H1 (cell line): ENCODE measurements at regions of chr11 and their contacts with region 1.

Region 1: DNA sequence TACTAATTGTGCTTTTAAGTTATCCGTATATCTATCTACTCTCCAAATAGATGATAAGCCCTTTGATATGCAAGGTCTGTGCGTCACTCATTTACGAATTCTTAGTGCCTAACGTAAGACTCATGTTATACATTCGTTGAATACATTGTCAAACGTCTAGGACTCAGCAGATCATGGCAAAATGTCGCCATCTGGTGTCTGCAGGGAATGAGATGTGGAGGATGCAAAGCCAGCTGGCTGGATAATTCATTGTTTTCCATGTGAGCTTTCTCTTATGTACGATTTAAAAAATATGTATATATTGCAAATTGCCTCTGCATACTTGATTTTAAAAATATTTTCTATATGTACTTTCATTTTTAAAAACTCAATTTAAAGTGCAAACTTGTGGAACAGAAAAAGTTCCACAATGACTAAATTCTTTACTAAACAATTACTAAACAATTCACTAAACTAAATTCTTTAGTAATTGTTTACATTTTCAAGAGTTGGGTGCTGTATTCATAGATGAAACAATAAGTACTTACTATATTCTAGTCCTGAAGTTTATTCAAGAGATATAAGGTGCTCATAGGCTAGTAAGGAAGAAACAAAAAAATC is 33.8 kb downstream of the ZNF202 start:
- DNase-seq: peak; percentile 15 to 71
- H3K4me3 ChIP-seq: no peak overlapping the region
- H3K27ac ChIP-seq: no peak overlapping the region
- H3K4me1 ChIP-seq: peaks cover 0 to 4% (median 0%) of the 10 kb centered on the region in 4 experiments; a peak in 2 of 7 replicates
- H3K27me3 ChIP-seq: no peaks in the 10 kb centered on the region
- CTCF ChIP-seq: peak; percentile 58 to 83 (median 81)
- EP300 ChIP-seq: no peak
- POLR2A ChIP-seq: no peak
- RAD21 ChIP-seq: peak; percentile 86 to 90

Region 2: GRCh38 chr11:123469089-123469488 is 238.6 kb before region 1 on chr11:
- CTCF ChIA-PET with region 1: no interaction called
- POLR2A ChIA-PET with region 1: no interaction called
- DNase-seq: no peak
- H3K4me3 ChIP-seq: no peak overlapping the region
- H3K27ac ChIP-seq: no peak overlapping the region
- H3K4me1 ChIP-seq: no peaks in the 10 kb centered on the region
- H3K27me3 ChIP-seq: no peaks in the 10 kb centered on the region
- CTCF ChIP-seq: no peak
- EP300 ChIP-seq: no peak
- POLR2A ChIP-seq: no peak
- RAD21 ChIP-seq: no peak

Region 3: GRCh38 chr11:123640677-123641494 is 66.8 kb before region 1 on chr11:
- CTCF ChIA-PET with region 1: interaction called, 301 read pairs
- POLR2A ChIA-PET with region 1: interaction called, 3 read pairs
- DNase-seq: peak in 1 of 2 experiments; percentile 86
- H3K4me3 ChIP-seq: no peak overlapping the region
- H3K27ac ChIP-seq: no peak overlapping the region
- H3K4me1 ChIP-seq: peaks cover 0 to 4% (median 3%) of the 10 kb centered on the region in 4 experiments; a peak in 5 of 7 replicates
- H3K27me3 ChIP-seq: 0 out of 7 replicates have a peak, but pooled peaks cover 0 to 2% (median 0%) of the 10 kb centered on the region in 4 experiments
- CTCF ChIP-seq: peak; percentile 85 to 92 (median 86)
- EP300 ChIP-seq: no peak
- POLR2A ChIP-seq: no peak
- RAD21 ChIP-seq: peak; percentile 94 to 95

Region 4: GRCh38 chr11:123672568-123672967 is 35.1 kb before region 1 on chr11:
- CTCF ChIA-PET with region 1: interaction called, 18 read pairs
- POLR2A ChIA-PET with region 1: no interaction called
- DNase-seq: no peak
- H3K4me3 ChIP-seq: no peak overlapping the region
- H3K27ac ChIP-seq: no peak overlapping the region
- H3K4me1 ChIP-seq: peaks cover 0 to 5% (median under 1%) of the 10 kb centered on the region in 4 experiments; a peak in 2 of 7 replicates
- H3K27me3 ChIP-seq: no peaks in the 10 kb centered on the region; a peak in 1 of 7 replicates
- CTCF ChIP-seq: no peak
- EP300 ChIP-seq: no peak
- POLR2A ChIP-seq: no peak
- RAD21 ChIP-seq: no peak

Region 5: DNA sequence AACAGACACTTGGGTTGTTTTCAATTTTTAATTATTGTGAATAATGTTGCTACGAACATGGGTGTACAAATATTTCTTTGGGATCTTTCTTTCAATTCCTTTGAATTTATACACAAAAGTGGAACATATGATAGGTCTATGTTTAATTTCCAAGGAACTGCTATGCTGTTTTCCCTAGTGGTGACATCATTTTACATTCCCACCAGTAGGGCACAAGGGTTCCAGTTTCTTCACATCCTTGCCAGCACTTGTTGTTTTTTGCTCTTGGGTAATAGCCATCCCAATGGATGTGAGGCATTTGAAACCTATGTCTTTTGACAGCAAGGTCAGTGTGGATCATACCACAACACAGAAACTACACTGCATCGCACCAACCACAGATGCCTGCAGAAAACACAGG is 11.5 kb before region 1 on chr11:
- CTCF ChIA-PET with region 1: interaction called, 33 read pairs
- POLR2A ChIA-PET with region 1: no interaction called
- DNase-seq: no peak
- H3K4me3 ChIP-seq: no peak overlapping the region
- H3K27ac ChIP-seq: no peak overlapping the region
- H3K4me1 ChIP-seq: no peaks in the 10 kb centered on the region
- H3K27me3 ChIP-seq: no peaks in the 10 kb centered on the region; a peak in 1 of 7 replicates
- CTCF ChIP-seq: peak in 1 of 3 experiments; percentile 10; a peak in 1 of 4 replicates
- EP300 ChIP-seq: no peak
- POLR2A ChIP-seq: no peak
- RAD21 ChIP-seq: no peak

Region 6: DNA sequence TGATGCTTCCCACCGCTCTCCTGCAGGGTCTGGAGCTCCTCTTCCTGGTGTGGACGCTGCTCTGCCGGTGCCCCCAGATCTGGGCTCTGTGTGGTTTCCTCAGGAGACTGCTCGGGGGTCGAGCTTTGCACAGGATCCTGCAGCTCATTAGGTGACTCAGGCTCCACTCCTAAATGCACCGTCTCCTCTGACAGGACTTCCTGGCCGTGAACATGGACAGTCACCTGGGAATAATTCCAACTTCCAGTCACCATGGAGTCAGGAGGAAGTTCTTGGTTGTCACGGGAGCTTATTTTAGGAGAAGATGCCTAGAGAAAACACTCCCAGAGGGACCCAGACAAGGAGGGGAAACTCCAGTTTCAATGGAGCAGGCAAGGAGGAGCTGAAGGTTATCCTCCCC is 21.9 kb after region 1 on chr11:
- CTCF ChIA-PET with region 1: interaction called, 21 read pairs
- POLR2A ChIA-PET with region 1: interaction called, 8 read pairs
- DNase-seq: no peak
- H3K4me3 ChIP-seq: no peak overlapping the region
- H3K27ac ChIP-seq: no peak overlapping the region
- H3K4me1 ChIP-seq: no peaks in the 10 kb centered on the region
- H3K27me3 ChIP-seq: no peaks in the 10 kb centered on the region
- CTCF ChIP-seq: no peak
- EP300 ChIP-seq: no peak
- POLR2A ChIP-seq: no peak
- RAD21 ChIP-seq: no peak

Region 7: GRCh38 chr11:123903932-123904331 is 196.2 kb after region 1 on chr11:
- CTCF ChIA-PET with region 1: no interaction called
- POLR2A ChIA-PET with region 1: no interaction called
- DNase-seq: no peak
- H3K4me3 ChIP-seq: no peak overlapping the region
- H3K27ac ChIP-seq: no peak overlapping the region
- H3K4me1 ChIP-seq: peaks cover 0 to 3% (median 0%) of the 10 kb centered on the region in 4 experiments; a peak in 2 of 7 replicates
- H3K27me3 ChIP-seq: no peaks in the 10 kb centered on the region
- CTCF ChIP-seq: no peak
- EP300 ChIP-seq: no peak
- POLR2A ChIP-seq: no peak
- RAD21 ChIP-seq: no peak